ENCODE measurements at regions of chr4 and their contacts with region 1.

Region 1: GRCh38 chr4:109406338-109406931 is 27.2 kb upstream of the SEC24B start:
- DNase-seq: peak in 1 of 3 donors; percentile 67
- ATAC-seq: peak; percentile 47
- H3K4me3 ChIP-seq: no peak overlapping the region
- H3K4me1 ChIP-seq: no peaks in the 10 kb centered on the region
- CTCF ChIP-seq: peak; percentile 21

Region 2: GRCh38 chr4:108683479-108683878 is 723.0 kb before region 1 on chr4:
- intact Hi-C with region 1: loop called in 1 of 2 experiments (anchors 10 kb)
- DNase-seq: peak in 1 of 3 donors; percentile 9
- ATAC-seq: no peak
- H3K4me3 ChIP-seq: no peak overlapping the region
- H3K4me1 ChIP-seq: no peaks in the 10 kb centered on the region
- CTCF ChIP-seq: no peak

Region 3: DNA sequence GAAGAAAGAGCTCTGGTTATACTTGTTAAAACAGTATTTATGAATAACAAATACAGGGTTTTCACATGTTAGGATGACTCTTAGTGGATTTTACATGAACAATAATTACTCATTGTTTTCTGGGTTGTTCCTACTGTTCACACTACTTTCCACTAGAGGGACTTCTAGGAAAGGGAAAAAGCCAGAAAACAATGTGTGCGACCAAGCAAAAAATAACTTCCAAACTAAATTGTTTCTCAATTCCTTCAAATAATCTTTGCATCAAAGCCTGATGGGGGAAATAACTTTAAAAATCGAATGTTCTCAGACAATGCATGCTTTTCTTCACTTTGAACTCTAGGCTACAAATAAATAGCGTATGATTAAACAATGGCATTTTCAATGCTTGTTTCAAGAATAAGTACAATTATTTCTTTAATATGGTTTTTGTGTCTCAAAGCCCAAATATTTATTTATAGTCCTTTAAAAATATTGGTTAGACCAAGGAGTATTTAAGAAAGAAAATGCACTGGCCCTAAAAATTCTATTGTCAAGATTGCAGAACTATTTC is 571.5 kb before region 1 on chr4:
- intact Hi-C with region 1: loop called in 1 of 2 experiments (anchors 10 kb)
- DNase-seq: no peak
- ATAC-seq: no peak
- H3K4me3 ChIP-seq: no peak overlapping the region
- H3K4me1 ChIP-seq: peaks cover 3% of the 10 kb centered on the region
- CTCF ChIP-seq: no peak

Region 4: GRCh38 chr4:109451544-109452273 is 45.3 kb after region 1 on chr4:
- intact Hi-C with region 1: no loop called
- DNase-seq: no peak
- ATAC-seq: no peak
- H3K4me3 ChIP-seq: no peak overlapping the region
- H3K4me1 ChIP-seq: no peaks in the 10 kb centered on the region
- CTCF ChIP-seq: no peak

Region 5: DNA sequence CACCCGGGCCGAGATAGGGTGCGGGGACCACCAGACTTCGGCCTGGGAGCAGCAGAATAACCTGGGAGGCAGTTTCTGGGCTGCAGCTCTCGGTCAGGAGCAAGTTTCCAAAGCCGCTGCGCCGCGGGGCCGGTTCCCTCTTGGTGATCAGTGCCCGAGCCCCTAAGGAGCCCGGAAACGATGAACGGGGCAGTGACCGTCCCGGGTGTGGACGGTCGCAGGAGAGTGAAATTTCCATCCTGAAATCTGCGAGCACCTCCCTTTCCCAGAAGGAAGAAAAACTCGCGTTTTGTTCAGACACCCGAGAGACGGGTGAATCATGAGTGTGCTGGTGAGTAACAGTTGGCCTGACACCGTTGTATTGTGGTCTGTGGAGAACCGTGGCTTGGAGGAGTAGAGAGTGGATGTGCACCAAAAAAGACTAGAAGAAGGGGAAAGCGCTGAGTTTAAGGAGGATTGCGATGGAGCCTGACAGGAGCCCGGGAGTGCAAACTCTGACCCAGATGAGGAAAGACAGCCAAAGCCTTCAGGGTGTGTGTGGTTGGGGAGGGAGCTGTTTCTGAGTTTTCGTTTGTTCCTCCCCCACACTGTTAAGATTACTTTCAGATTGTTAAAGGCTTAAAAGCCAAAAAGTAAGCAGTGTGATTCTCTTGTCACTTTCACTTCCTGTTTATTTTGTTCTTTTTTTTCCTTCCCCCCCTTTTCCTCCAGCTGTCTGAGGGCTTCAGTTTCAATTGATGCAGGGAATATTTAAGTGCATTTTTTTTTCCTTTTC is 154.4 kb after region 1 on chr4:
- intact Hi-C with region 1: no loop called
- DNase-seq: peak; percentile 35 to 70 (median 44)
- ATAC-seq: peak; percentile 55
- H3K4me3 ChIP-seq: peak overlapping the region; percentile 23
- H3K4me1 ChIP-seq: peaks cover 5% of the 10 kb centered on the region
- CTCF ChIP-seq: no peak

Measured in mucosa of descending colon (tissue), 3 donors.